ENCODE measurements at regions of chr10 and their contacts with region 1.

Region 1: DNA sequence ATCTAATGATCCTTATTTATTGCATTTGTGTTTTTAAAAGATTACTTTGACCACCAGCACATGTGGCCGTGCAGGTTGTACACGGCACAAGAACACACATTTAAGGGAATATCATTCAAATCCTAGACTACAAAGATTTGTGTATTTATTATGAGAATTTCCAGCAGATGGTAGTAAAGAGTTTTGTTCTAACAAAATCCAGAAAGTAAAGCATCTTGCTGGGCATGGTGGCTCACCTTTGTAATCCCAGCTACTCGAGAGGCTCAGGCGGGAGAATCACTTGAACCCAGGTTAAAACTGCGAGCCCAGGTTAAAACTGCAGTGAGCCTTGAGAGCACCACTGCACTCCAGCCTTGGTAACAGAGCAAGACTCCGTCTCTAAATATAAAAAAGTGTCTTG is 31.5 kb downstream of the MACROH2A2 start:
- DNase-seq: peak; percentile 45 to 53
- H3K4me3 ChIP-seq: no peak overlapping the region
- H3K4me3 Mint-ChIP-seq: no peak overlapping the region
- H3K27ac Mint-ChIP-seq: no peak overlapping the region
- H3K4me1 ChIP-seq: peaks cover 46% of the 10 kb centered on the region
- H3K4me1 Mint-ChIP-seq: peaks cover 30% of the 10 kb centered on the region
- H3K27me3 ChIP-seq: no peaks in the 10 kb centered on the region
- H3K27me3 Mint-ChIP-seq: peaks cover 6% of the 10 kb centered on the region
- CTCF ChIP-seq: peak; percentile 25 to 52

Region 2: GRCh38 chr10:69895759-69896158 is 188.4 kb before region 1 on chr10:
- CTCF ChIA-PET with region 1: no interaction called
- POLR2A ChIA-PET with region 1: no interaction called
- intact Hi-C with region 1: no loop called
- DNase-seq: no peak
- H3K4me3 ChIP-seq: no peak overlapping the region
- H3K4me3 Mint-ChIP-seq: no peak overlapping the region
- H3K27ac Mint-ChIP-seq: no peak overlapping the region
- H3K4me1 ChIP-seq: peaks cover 27% of the 10 kb centered on the region
- H3K4me1 Mint-ChIP-seq: peaks cover 25% of the 10 kb centered on the region
- H3K27me3 ChIP-seq: no peaks in the 10 kb centered on the region
- H3K27me3 Mint-ChIP-seq: peaks cover 3% of the 10 kb centered on the region
- CTCF ChIP-seq: no peak

Region 3: DNA sequence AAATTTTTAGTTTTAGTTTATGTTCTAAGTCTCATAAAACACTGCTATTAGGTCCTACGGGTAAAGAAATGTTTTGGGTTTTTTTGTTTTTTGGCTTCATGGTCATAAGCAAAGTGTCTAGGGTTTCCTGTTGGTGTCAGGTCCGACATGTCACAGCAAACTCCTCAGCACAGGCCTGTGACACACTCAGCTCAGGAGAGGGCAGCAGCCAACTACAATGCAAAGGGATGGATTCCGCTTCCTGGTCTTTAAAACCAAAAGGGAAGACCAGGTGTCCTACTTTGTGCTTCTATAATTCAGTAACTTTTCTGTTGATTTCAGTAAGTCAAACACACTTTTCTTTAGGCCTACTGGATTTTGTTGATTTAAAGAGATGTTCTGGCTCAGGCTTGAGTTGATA is 115.4 kb before region 1 on chr10:
- CTCF ChIA-PET with region 1: no interaction called
- POLR2A ChIA-PET with region 1: no interaction called
- intact Hi-C with region 1: loop called (anchors 2 kb)
- DNase-seq: peak in 1 of 2 experiments; percentile 65
- H3K4me3 ChIP-seq: no peak overlapping the region
- H3K4me3 Mint-ChIP-seq: no peak overlapping the region
- H3K27ac Mint-ChIP-seq: no peak overlapping the region
- H3K4me1 ChIP-seq: no peaks in the 10 kb centered on the region
- H3K4me1 Mint-ChIP-seq: no peaks in the 10 kb centered on the region
- H3K27me3 ChIP-seq: peaks cover 2% of the 10 kb centered on the region
- H3K27me3 Mint-ChIP-seq: peaks cover 34% of the 10 kb centered on the region
- CTCF ChIP-seq: peak; percentile 32 to 79

Region 4: DNA sequence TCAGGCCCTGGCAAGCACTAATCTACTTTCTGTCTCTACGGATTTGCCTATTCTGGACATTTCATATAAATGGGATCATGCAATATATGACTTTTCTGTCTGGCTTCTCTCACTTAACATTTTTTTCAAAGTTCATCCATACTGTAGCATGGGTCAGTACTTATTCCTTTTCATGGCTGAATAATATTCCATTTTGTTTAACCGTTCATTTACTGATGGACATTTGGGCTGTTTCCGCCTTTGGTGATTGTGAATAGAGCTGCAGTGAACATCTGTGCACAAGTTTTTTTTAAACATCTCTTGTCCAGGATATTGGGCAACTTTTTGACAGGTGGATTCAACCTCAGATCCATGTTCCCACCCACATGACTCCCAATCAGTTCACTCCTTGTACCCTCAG is 17.5 kb after region 1 on chr10:
- CTCF ChIA-PET with region 1: interaction called, 15 read pairs
- POLR2A ChIA-PET with region 1: interaction called, 9 read pairs
- intact Hi-C with region 1: loop called (anchors 1 kb)
- DNase-seq: no peak
- H3K4me3 ChIP-seq: no peak overlapping the region
- H3K4me3 Mint-ChIP-seq: no peak overlapping the region
- H3K27ac Mint-ChIP-seq: no peak overlapping the region
- H3K4me1 ChIP-seq: peaks cover 6% of the 10 kb centered on the region; the same call in 1 of the 2 replicates
- H3K4me1 Mint-ChIP-seq: peaks cover 6% of the 10 kb centered on the region
- H3K27me3 ChIP-seq: no peaks in the 10 kb centered on the region
- H3K27me3 Mint-ChIP-seq: no peaks in the 10 kb centered on the region
- CTCF ChIP-seq: no peak

Region 5: GRCh38 chr10:70115948-70116682 is 31.9 kb after region 1 on chr10:
- CTCF ChIA-PET with region 1: interaction called, 13 read pairs
- POLR2A ChIA-PET with region 1: no interaction called
- intact Hi-C with region 1: loop called (anchors 1 kb)
- DNase-seq: peak; percentile 76 to 87
- H3K4me3 ChIP-seq: no peak overlapping the region
- H3K4me3 Mint-ChIP-seq: no peak overlapping the region
- H3K27ac Mint-ChIP-seq: peak overlapping the region; percentile 7
- H3K4me1 ChIP-seq: no peaks in the 10 kb centered on the region
- H3K4me1 Mint-ChIP-seq: no peaks in the 10 kb centered on the region
- H3K27me3 ChIP-seq: no peaks in the 10 kb centered on the region
- H3K27me3 Mint-ChIP-seq: no peaks in the 10 kb centered on the region
- CTCF ChIP-seq: peak; percentile 97 to 99

Region 6: GRCh38 chr10:70132098-70133029 is 48.2 kb after region 1 on chr10 and contains the start of gene AIFM2:
- CTCF ChIA-PET with region 1: interaction called, 5 read pairs
- POLR2A ChIA-PET with region 1: no interaction called
- intact Hi-C with region 1: loop called (anchors 1 kb)
- DNase-seq: peak; percentile 94 to 97
- H3K4me3 ChIP-seq: peak within 1 kb of the TSS; percentile 72
- H3K4me3 Mint-ChIP-seq: peak within 1 kb of the TSS; percentile 81
- H3K27ac Mint-ChIP-seq: peak within 1 kb of the TSS; percentile 78
- H3K4me1 ChIP-seq: peaks cover 21% of the 10 kb centered on the region
- H3K4me1 Mint-ChIP-seq: peaks cover 16% of the 10 kb centered on the region
- H3K27me3 ChIP-seq: no peaks in the 10 kb centered on the region
- H3K27me3 Mint-ChIP-seq: no peaks in the 10 kb centered on the region
- CTCF ChIP-seq: peak in 1 of 2 experiments; percentile 21
- total RNA-seq, gene AIFM2: 29.2 and 31.1 TPM in 2 replicates

Region 7: DNA sequence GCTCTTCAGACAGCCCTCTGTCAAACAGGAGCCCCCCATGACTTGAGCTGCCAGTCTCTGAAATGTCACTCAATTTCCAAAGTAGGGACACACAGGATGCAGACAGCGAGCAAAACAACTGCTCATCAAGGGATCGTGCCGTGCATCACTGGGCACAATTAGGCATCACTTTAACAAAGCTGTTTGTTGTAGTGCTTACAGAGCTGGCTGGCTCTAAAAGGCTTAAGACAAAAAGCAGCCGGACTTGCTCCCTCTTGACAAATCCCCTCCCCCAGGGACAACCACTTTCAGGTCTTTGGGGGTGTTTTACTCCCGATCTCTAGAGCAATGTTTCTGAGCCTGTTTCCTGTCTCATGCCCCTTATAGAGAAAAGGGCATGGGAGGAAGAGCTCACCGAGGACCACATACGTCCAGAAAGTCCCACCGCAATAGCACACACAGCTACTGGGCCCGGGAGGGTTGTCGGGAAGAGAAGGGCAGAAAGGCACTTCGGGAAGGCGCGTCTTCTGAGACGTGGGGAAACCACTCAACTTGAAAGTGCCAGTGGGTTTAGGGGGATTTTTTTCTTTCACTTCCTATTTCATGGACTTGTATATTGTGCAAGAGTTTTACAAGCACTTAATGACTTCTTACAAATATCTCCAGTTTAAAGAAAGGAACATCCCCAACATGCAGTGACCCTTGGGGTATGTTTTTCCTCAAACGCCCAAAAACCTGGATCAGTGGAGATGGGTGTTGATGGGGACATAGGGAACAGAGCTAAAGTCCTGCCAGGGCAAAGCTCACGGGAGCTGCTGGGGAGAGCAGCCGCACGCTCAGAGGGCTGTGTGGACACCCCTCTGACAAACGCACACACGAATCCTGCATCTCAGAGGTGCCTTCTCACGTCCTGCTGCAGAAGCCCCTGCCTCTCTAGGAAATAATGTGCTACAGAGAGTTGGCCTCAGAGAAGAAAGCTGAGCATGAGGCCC is 271.1 kb after region 1 on chr10:
- CTCF ChIA-PET with region 1: no interaction called
- POLR2A ChIA-PET with region 1: no interaction called
- intact Hi-C with region 1: loop called (anchors 1 kb)
- DNase-seq: no peak
- H3K4me3 ChIP-seq: no peak overlapping the region
- H3K4me3 Mint-ChIP-seq: no peak overlapping the region
- H3K27ac Mint-ChIP-seq: no peak overlapping the region
- H3K4me1 ChIP-seq: peaks cover 60% of the 10 kb centered on the region
- H3K4me1 Mint-ChIP-seq: peaks cover 47% of the 10 kb centered on the region
- H3K27me3 ChIP-seq: no peaks in the 10 kb centered on the region
- H3K27me3 Mint-ChIP-seq: no peaks in the 10 kb centered on the region
- CTCF ChIP-seq: no peak

Measured in Caco-2 (cell line).